SK-N-SH (cell line): ENCODE measurements at regions of chr4 and their contacts with region 1.

Region 1: DNA sequence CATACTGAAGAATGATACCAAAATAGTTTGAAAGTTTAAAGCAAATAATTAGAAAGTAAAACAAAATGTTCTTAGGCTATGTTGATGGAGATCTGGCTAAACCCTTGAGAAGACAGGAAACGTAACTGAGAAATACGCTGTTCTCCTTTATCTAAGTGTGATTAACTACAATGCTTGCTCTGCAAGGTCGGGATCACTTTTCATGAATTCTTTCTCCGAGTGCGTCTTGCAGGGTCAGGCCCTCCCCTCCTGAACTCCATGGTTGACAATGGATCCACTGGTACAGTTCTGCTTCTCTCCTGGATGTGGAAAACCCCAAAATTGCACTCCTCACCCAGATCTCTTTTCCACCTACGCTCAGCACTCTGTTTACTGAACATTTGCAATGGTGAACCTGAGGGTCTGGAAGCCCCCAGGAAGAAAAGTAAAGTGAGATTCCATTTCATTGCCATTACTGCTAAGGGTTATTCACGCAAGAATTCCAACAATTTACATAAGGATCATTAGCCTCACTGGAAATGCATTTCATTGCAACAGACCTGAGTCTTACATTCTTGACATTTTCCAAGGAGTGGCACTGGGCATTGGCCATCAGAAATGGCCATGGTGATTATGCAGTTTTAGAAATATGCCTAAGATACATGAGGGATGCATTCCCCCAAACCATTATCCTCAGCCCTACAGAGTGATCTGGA is 24.6 kb upstream of the WWC2 start:
- DNase-seq: no peak
- H3K4me3 ChIP-seq: no peak overlapping the region
- H3K27ac ChIP-seq: no peak overlapping the region
- H3K4me1 ChIP-seq: peaks cover 0 to 10% of the 10 kb centered on the region in 2 experiments; a peak in 1 of 4 replicates
- H3K27me3 ChIP-seq: no peaks in the 10 kb centered on the region
- CTCF ChIP-seq: no peak
- EP300 ChIP-seq: no peak
- RAD21 ChIP-seq: no peak

Region 2: DNA sequence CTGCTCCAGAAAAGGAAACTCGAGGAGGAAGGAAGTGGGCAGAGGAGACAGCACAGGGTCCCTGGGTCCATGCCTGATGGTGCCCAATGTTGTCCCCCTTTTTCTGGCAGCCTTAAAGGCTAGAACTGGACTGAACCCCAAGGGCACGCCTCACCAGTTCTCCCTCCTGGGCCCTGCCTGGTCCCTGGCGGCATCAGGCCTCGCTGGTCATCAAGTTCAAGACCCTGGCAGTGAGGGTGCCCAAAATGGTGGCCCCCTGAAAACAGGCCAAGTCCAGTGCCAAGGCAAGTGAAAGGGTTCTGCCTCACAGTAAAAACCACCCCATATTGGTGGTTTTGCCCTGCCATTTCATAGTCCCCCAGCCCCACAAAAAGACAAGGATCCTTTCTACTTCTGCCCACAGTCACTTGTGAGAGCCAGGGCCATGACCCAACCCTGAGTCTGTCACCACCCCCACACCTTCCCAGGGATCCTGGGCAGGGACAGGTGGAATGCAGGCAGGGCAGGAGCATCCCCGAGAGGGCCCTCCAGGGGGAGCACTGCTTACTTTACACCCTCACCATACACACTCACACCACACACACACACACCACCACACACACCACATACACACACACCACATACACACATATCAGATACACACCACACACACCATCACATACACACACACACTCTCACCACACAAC is 264.9 kb before region 1 on chr4:
- CTCF ChIA-PET with region 1: no interaction called
- POLR2A ChIA-PET with region 1: no interaction called
- DNase-seq: no peak
- H3K4me3 ChIP-seq: no peak overlapping the region
- H3K27ac ChIP-seq: no peak overlapping the region
- H3K4me1 ChIP-seq: peaks cover 0 to 2% of the 10 kb centered on the region in 2 experiments; a peak in 1 of 4 replicates
- H3K27me3 ChIP-seq: no peaks in the 10 kb centered on the region
- CTCF ChIP-seq: no peak
- EP300 ChIP-seq: no peak
- RAD21 ChIP-seq: no peak

Region 3: DNA sequence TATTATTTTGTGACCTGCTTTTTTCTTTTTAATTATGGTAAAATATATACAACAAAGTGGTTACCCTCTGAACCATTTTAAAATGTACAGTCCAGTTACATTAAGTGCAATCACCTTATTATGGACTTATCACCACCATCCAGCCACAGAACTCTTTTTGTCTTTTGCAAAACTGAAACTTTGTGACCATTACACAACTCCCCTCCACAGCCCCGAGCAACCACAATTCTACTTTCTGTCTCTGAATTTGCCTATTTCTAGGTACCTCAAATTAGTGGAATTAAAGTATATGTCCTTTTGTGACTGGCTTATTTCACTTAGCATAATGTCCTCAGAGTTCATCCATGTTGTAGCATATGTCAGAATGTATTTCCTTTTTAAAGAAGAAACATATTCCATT is 14.6 kb before region 1 on chr4:
- CTCF ChIA-PET with region 1: interaction called, 10 read pairs
- POLR2A ChIA-PET with region 1: no interaction called
- DNase-seq: no peak
- H3K4me3 ChIP-seq: no peak overlapping the region
- H3K27ac ChIP-seq: no peak overlapping the region
- H3K4me1 ChIP-seq: no peaks in the 10 kb centered on the region; a peak in 1 of 4 replicates
- H3K27me3 ChIP-seq: no peaks in the 10 kb centered on the region; the same call in 1 of the 2 replicates
- CTCF ChIP-seq: no peak
- EP300 ChIP-seq: no peak
- RAD21 ChIP-seq: no peak

Region 4: DNA sequence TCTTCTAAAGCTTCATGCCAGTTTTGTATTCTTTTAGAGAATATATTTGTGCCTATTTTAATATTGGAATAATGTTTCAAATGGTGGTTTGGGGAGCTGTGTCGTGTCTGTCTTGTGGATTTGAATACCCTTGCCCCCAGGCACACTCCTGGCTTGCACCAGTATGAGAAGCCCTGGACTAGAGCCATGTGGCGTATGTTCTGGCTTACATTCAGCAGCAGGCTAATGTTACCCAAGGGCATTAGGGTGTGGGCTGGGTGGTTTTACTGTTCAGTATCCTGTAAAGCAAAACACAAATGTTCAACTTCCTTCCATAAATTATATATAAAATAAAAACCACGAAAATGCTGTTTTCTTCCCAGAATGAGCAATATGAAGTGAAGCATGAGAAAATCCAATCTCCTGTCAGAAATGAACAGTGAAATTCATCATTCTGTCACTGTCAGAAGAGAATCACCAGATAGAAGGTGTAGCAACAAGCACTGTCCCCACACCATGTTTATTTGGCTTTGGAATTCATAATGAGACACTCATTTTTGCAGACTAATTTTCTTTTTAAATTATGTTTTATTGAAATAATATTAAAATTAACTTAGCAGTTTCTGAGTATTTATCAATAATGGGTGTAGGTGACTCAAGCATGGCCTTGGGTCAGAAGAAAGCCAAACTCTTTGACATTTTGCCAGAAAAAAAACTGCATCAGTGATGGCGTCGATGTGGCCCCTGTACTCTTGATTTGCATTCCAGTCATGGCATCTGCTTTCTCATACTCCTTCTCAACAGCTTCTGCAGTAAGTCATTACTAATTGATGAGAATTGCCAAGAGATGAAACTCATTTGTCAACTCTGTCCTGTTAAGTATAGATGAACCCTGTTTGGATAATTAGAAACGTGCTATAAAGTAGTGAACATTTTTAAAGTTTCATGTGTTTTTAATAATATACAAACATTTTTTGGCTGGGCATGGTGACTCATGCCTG is 68.4 kb after region 1 on chr4:
- CTCF ChIA-PET with region 1: interaction called, 14 read pairs
- POLR2A ChIA-PET with region 1: no interaction called
- DNase-seq: peak; percentile 76
- H3K4me3 ChIP-seq: no peak overlapping the region
- H3K27ac ChIP-seq: peak overlapping the region; percentile 46 to 96
- H3K4me1 ChIP-seq: peaks cover 33 to 38% of the 10 kb centered on the region in 2 experiments
- H3K27me3 ChIP-seq: no peaks in the 10 kb centered on the region
- CTCF ChIP-seq: no peak
- EP300 ChIP-seq: peak; percentile 14 to 83; a peak in 2 of 4 replicates
- RAD21 ChIP-seq: 0 out of 2 replicates have a peak, but pooled peaks have one; percentile 2

Region 5: DNA sequence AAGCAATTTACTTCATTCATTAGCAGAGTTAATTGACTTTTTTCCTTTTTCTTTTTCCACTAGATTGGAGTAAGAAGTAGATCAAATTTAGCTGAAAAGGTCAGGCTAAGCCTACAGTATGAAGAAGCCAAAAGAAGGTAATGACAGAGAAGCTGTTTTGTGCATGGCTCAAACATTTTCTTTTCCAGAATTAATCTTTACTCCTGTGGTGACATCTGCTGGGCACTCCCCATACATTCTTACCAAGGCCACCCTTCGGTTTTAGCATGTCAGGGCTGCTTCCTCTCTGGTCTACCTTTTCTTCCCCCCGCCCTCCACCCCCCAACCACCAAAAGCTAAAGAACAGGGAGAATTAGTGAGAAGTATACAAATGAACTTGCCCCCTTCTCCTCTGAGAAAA is 175.4 kb after region 1 on chr4:
- CTCF ChIA-PET with region 1: interaction called, 109 read pairs
- POLR2A ChIA-PET with region 1: no interaction called
- DNase-seq: peak; percentile 57
- H3K4me3 ChIP-seq: no peak overlapping the region
- H3K27ac ChIP-seq: no peak overlapping the region
- H3K4me1 ChIP-seq: no peaks in the 10 kb centered on the region; a peak in 2 of 4 replicates
- H3K27me3 ChIP-seq: no peaks in the 10 kb centered on the region
- CTCF ChIP-seq: peak; percentile 63
- EP300 ChIP-seq: no peak
- RAD21 ChIP-seq: peak; percentile 86